CD4-positive, alpha-beta memory T cell (primary cell): ENCODE measurements at regions of chr15 and their contacts with region 1.

Region 1: DNA sequence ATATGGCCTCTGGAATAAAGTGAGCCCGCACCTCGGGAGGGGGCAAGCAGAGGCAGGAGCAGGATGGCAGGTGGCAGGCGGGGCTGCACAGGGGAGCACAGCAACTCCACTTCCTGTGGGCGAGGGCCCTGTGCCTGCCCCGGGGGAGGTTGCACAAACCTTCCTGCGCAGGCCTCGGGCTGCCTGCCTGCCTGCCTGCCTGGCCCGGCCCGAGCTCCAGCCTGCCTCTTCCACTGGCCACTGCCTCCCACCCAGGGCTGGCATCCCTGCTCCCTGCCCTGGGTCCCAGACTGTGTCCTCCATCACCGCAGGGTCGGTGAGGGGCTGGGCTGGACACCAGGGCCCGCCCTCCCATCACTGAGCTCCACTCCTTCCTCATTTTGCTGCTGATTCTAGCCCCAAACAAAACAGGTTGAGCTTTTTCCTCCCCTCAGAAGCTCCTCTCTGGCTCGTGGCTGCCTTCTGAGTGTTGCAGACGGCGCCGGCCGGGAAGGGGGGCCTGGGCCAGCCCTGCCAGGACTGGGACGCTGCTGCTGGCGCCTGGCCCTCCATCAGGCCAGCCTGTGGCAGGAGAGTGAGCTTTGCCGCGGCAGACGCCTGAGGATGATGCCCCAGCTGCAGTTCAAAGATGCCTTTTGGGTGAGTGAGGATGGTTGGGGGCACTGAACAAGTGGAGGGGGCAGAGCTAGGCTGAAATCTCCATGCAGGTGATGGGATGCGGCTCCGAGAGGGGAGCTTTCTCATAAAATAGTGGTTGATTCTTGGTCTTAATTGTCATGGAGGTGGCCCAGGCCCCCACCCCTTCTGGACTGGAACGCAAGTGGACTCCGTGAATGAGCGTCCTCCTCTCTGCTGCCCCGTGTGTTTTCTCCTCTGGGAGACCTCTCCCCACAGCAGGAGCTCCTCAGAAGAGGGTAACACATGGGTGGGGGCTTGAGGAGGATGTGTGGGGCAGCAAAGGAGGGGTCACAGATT is at the start of gene PSTPIP1:
- DNase-seq: peak; percentile 65 to 76 (median 74)
- H3K4me3 ChIP-seq: peak within 1 kb of the TSS; percentile 94 to 96
- H3K4me3 Mint-ChIP-seq: peak within 1 kb of the TSS; percentile 94 to 97 (median 96)
- H3K27ac ChIP-seq: peak within 1 kb of the TSS; percentile 79
- H3K27ac Mint-ChIP-seq: peak within 1 kb of the TSS; percentile 92 to 97 (median 96)
- H3K4me1 ChIP-seq: peaks cover 56% of the 10 kb centered on the region
- H3K4me1 Mint-ChIP-seq: peaks cover 38 to 92% (median 52%) of the 10 kb centered on the region in 4 donors
- H3K27me3 ChIP-seq: no peaks in the 10 kb centered on the region
- H3K27me3 Mint-ChIP-seq: no peaks in the 10 kb centered on the region
- total RNA-seq, gene PSTPIP1: 225 to 233 TPM

Region 2: GRCh38 chr15:76931397-76932007 is 63.8 kb before region 1 on chr15 and contains the start of gene RCN2:
- CTCF ChIA-PET with region 1: interaction called, 4 read pairs
- POLR2A ChIA-PET with region 1: interaction called, 24 read pairs
- intact Hi-C with region 1: loop called (anchors 1 kb)
- DNase-seq: peak; percentile 89 to 92 (median 91)
- H3K4me3 ChIP-seq: peak within 1 kb of the TSS; percentile 48 to 67
- H3K4me3 Mint-ChIP-seq: peak within 1 kb of the TSS; percentile 89 to 94 (median 91)
- H3K27ac ChIP-seq: peak within 1 kb of the TSS; percentile 63
- H3K27ac Mint-ChIP-seq: peak within 1 kb of the TSS; percentile 70 to 95 (median 94)
- H3K4me1 ChIP-seq: peaks cover 26% of the 10 kb centered on the region
- H3K4me1 Mint-ChIP-seq: peaks cover 18 to 33% (median 28%) of the 10 kb centered on the region in 4 donors
- H3K27me3 ChIP-seq: no peaks in the 10 kb centered on the region
- H3K27me3 Mint-ChIP-seq: no peaks in the 10 kb centered on the region
- total RNA-seq, gene RCN2: 28.4 to 30.2 TPM

Region 3: GRCh38 chr15:77024271-77025082 is 29.2 kb after region 1 on chr15:
- CTCF ChIA-PET with region 1: interaction called, 69 read pairs
- POLR2A ChIA-PET with region 1: interaction called, 472 read pairs
- intact Hi-C with region 1: loop called (anchors 1 kb)
- DNase-seq: peak; percentile 55 to 66 (median 59)
- H3K4me3 ChIP-seq: no peak overlapping the region
- H3K4me3 Mint-ChIP-seq: peak overlapping the region in 1 of 8 donors; percentile 70
- H3K27ac ChIP-seq: peak overlapping the region; percentile 41
- H3K27ac Mint-ChIP-seq: peak overlapping the region; percentile 77 to 100 (median 98)
- H3K4me1 ChIP-seq: peaks cover 48% of the 10 kb centered on the region
- H3K4me1 Mint-ChIP-seq: peaks cover 28 to 50% (median 43%) of the 10 kb centered on the region in 4 donors
- H3K27me3 ChIP-seq: no peaks in the 10 kb centered on the region
- H3K27me3 Mint-ChIP-seq: no peaks in the 10 kb centered on the region

Region 4: GRCh38 chr15:77070495-77071304 is 75.4 kb after region 1 on chr15 and contains the start of gene TSPAN3:
- CTCF ChIA-PET with region 1: no interaction called
- POLR2A ChIA-PET with region 1: interaction called, 6 read pairs
- intact Hi-C with region 1: loop called (anchors 2 kb)
- DNase-seq: peak; percentile 89 to 90 (median 90)
- H3K4me3 ChIP-seq: peak within 1 kb of the TSS; percentile 14 to 63
- H3K4me3 Mint-ChIP-seq: peak within 1 kb of the TSS; percentile 82 to 92 (median 88)
- H3K27ac ChIP-seq: peak within 1 kb of the TSS; percentile 40
- H3K27ac Mint-ChIP-seq: peak within 1 kb of the TSS; percentile 74 to 90 (median 85)
- H3K4me1 ChIP-seq: peaks cover 14% of the 10 kb centered on the region
- H3K4me1 Mint-ChIP-seq: peaks cover 13 to 23% (median 18%) of the 10 kb centered on the region in 4 donors
- H3K27me3 ChIP-seq: no peaks in the 10 kb centered on the region
- H3K27me3 Mint-ChIP-seq: no peaks in the 10 kb centered on the region
- total RNA-seq, gene TSPAN3: 13.3 to 14.3 TPM